Right ventricle myocardium inferior (tissue), 1 donor: ENCODE measurements at regions of chr20 and their contacts with region 1.

Region 1: GRCh38 chr20:54199721-54200176 is 8.1 kb upstream of the PFDN4 start:
- DNase-seq: peak; percentile 82
- ATAC-seq: no peak

Region 2: DNA sequence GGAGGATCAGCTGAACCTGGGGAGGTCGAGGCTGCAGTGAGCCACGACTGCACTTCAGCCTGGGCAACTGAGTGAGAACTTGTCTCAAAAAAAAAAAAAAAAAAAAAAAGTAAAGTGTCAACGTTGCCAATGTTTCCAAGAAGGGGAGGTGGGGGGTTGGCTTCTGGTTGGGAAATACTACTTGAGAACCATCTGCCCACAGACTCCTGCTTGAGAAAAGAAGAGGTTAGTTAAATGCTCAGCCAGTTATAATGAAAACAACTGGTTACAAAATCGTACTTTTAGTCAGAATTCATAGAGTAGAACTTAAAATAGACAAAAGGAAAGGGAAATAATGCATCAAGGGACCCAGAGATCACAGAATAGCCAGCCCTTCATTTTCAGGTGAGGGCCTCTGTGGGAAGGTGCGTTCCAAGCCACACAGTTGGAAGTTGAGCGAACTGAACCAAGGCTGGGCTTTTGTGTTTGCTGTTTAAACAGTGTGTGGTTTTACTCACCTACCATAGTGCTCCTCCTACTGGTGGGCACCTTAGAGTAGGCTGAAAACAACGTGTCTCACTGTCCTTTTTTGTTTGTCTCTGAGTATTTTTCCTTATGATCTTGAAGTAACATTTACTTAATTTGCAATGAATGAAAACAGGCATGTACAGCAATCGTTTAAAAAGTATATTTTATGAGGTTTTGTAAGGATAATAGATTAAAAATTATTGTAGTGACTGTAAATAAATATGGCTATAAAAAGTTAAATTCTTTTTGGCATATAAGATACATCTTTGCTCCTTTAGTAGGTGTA is 330.1 kb before region 1 on chr20:
- intact Hi-C with region 1: no loop called
- DNase-seq: no peak
- ATAC-seq: peak; percentile 90

Region 3: DNA sequence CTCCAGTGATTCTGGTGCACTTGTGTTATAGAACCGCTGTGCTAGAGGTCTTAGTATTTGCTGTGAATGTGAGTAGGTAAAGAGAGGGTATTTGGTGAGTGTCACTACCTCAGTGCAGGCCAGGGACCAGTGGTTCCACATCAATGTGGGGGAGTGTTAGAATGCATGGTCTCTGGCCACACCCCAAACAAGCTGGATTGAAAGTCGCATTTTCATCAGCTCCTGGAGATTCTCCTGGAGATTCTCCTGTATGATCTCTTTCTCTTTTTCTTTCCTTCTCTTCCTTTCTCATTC is 102.6 kb before region 1 on chr20:
- intact Hi-C with region 1: loop called (anchors 1 kb)
- DNase-seq: no peak
- ATAC-seq: no peak

Region 4: GRCh38 chr20:54176610-54177009 is 23.1 kb before region 1 on chr20:
- intact Hi-C with region 1: no loop called
- DNase-seq: no peak
- ATAC-seq: no peak

Region 5: GRCh38 chr20:54257071-54257840 is 57.5 kb after region 1 on chr20:
- intact Hi-C with region 1: no loop called
- DNase-seq: no peak
- ATAC-seq: no peak

Region 6: DNA sequence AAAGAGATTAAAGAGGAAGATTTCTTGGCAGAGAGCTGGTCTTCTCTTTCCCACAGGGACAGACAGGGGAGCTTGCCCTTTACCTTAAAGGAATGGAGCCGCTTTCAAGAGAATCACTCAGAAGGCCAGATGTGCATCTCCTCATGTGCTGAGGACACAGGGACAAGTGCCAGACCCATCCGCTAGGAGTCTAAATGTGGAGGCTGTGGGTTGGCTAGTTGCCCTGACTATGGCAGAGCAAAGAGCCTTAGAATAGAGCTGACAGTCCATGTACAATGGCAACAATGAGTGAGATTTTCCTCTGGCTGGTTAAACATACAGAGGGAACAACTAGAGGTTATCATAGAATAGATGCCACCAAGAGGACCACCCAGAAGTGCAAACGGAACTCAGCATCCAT is 268.3 kb after region 1 on chr20:
- intact Hi-C with region 1: no loop called
- DNase-seq: no peak
- ATAC-seq: no peak